ENCODE measurements at regions of chr7 and their contacts with region 1.

Region 1: GRCh38 chr7:101882595-101883564 is 65.5 kb downstream of the CUX1 start:
- DNase-seq: peak; percentile 93 to 99
- H3K4me3 ChIP-seq: peak overlapping the region; percentile 39; the same call in 1 of the 2 replicates
- H3K27ac ChIP-seq: peak overlapping the region; percentile 99
- H3K4me1 ChIP-seq: peaks cover 53% of the 10 kb centered on the region
- H3K27me3 ChIP-seq: no peaks in the 10 kb centered on the region
- CTCF ChIP-seq: no peak

Region 2: DNA sequence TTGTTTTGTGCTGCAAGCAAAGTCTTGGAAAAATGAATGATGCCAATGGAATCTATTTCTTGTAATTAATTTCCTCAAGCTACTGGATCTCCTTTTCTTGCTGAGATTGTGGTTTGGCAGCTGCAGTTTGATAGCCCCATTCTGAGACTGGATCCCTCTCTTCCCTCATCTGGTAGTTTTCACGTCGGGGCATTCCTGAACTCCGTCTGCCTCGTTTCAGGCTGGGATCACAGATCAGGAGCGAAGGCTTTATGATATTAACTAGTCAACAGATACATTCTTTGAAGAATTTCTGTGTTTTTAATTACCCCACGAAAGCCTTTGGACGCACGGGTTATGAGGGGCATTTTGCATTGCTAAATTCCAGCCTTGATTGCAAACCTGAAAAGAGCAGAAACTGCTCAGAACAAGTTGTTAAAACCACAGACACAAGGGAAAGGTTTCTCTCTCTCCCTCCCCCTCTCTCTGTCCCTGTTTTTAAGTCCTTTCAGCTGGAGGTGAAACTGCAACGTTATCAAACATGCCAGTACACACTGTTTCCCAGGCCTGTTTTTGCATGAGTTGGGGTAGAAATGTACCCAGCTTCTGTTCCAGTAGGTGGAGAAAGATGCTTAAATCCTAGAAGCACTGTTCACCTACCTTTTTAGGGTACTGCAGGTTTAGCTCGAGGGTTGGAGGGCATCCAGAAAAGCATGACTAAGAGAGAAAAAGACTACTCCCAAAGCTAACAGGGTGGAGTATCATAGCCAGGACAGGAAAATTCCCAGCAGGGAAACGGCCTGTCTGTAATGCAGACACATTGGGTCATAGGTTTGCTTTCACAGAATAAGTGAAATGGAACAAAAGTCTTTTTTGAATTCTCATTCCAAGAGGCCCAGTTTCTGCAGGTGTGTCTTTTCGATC is 58.9 kb after region 1 on chr7:
- CTCF ChIA-PET with region 1: no interaction called
- POLR2A ChIA-PET with region 1: no interaction called
- intact Hi-C with region 1: loop called (anchors 1 kb)
- DNase-seq: peak; percentile 76 to 89
- H3K4me3 ChIP-seq: no peak overlapping the region; the same call in 1 of the 2 replicates
- H3K27ac ChIP-seq: peak overlapping the region; percentile 84
- H3K4me1 ChIP-seq: peaks cover 34% of the 10 kb centered on the region
- H3K27me3 ChIP-seq: no peaks in the 10 kb centered on the region
- CTCF ChIP-seq: no peak

Region 3: GRCh38 chr7:102028206-102028835 is 145.4 kb after region 1 on chr7:
- CTCF ChIA-PET with region 1: no interaction called
- POLR2A ChIA-PET with region 1: no interaction called
- intact Hi-C with region 1: no loop called
- DNase-seq: no peak
- H3K4me3 ChIP-seq: no peak overlapping the region
- H3K27ac ChIP-seq: no peak overlapping the region
- H3K4me1 ChIP-seq: peaks cover 3% of the 10 kb centered on the region; the same call in 1 of the 2 replicates
- H3K27me3 ChIP-seq: no peaks in the 10 kb centered on the region
- CTCF ChIP-seq: no peak

Region 4: GRCh38 chr7:102042016-102042656 is 159.3 kb after region 1 on chr7:
- CTCF ChIA-PET with region 1: interaction called, 15 read pairs
- POLR2A ChIA-PET with region 1: no interaction called
- intact Hi-C with region 1: no loop called
- DNase-seq: peak; percentile 33 to 69
- H3K4me3 ChIP-seq: no peak overlapping the region
- H3K27ac ChIP-seq: 0 out of 2 replicates have a peak overlapping the region, but pooled peaks have one; percentile 21
- H3K4me1 ChIP-seq: peaks cover 6% of the 10 kb centered on the region
- H3K27me3 ChIP-seq: no peaks in the 10 kb centered on the region
- CTCF ChIP-seq: no peak

Region 5: DNA sequence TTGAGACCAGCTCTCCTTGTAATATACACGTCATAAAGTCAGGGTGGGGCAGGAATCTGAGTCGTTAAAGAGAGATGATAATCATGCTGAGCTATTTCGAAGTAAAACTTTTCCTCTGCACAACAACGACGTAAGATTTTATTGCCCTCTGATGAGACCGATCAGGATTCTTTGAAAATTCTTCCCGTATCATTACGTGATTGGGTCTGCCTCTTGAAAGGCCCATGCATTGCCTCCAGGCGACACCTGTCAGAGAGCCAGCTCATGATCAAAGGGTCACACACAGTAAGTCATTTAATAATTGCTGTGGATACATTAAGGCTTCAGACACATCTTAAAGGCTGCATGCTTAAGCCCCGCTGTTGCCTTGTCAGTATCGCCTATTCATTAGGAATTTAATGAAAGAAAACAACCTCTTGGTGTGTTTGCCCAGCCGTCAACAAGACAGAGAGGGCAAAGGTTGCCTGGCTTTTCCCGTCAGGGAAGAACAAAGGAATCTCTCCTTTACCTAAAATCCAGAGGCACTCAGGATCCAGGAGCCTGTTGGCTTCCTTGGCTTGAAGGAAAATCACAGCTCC is 214.8 kb after region 1 on chr7:
- CTCF ChIA-PET with region 1: no interaction called
- POLR2A ChIA-PET with region 1: no interaction called
- intact Hi-C with region 1: no loop called
- DNase-seq: no peak
- H3K4me3 ChIP-seq: no peak overlapping the region
- H3K27ac ChIP-seq: no peak overlapping the region
- H3K4me1 ChIP-seq: 0 out of 2 replicates have a peak, but pooled peaks cover 6% of the 10 kb centered on the region
- H3K27me3 ChIP-seq: no peaks in the 10 kb centered on the region
- CTCF ChIP-seq: no peak

Region 6: DNA sequence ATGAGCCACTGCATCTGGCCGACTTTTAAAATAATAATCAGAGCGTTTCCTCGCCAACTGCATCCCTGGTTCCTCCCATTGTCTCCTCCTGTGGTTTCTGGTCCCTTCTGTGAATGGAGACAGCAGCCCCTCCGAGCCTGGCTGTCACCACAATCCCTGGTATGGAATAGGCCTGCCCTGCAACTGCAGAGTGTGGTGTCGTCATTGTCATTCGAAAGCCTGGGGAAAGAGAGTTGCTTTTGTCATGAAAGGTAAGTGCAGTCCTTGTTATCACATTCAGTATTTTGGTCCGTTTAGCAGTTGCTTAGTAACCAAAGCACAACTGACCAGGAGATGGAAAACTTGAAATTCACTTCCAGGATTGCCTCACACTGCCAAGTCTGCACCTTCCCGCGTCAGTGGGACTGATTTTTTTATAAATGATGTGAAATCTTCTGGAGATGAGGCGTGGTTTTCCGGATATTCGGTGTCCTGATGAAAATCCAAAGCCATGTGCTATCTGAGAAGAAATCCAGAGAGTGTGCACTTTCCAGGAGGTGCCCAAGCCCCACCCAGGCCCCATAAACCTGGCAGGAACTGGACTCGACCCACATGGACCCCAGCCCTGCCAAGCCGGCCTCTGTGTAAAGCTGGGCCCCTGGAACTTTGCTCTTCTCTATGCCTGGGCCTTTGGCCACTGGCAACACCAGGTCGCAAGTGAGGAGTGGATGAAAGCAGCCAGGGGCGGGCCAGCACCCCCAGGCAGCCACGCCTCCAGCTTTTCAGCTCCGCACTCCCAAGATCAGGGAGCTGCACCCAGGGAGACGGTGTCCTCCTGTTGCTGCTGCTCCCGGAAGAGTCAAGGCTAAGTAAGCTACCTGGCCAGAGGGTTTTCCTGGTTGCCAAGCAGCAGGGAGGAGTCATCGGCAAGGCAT is 270.0 kb after region 1 on chr7:
- CTCF ChIA-PET with region 1: no interaction called
- POLR2A ChIA-PET with region 1: interaction called, 7 read pairs
- intact Hi-C with region 1: loop called (anchors 1 kb)
- DNase-seq: peak; percentile 97 to 98
- H3K4me3 ChIP-seq: peak overlapping the region; percentile 36; the same call in 1 of the 2 replicates
- H3K27ac ChIP-seq: peak overlapping the region; percentile 99
- H3K4me1 ChIP-seq: peaks cover 41% of the 10 kb centered on the region
- H3K27me3 ChIP-seq: no peaks in the 10 kb centered on the region
- CTCF ChIP-seq: no peak

Region 7: GRCh38 chr7:102396027-102397019 is 513.4 kb after region 1 on chr7 and contains the start of gene PRKRIP1:
- CTCF ChIA-PET with region 1: interaction called, 6 read pairs
- POLR2A ChIA-PET with region 1: no interaction called
- intact Hi-C with region 1: loop called (anchors 10 kb)
- DNase-seq: peak; percentile 91 to 94
- H3K4me3 ChIP-seq: peak within 1 kb of the TSS; percentile 86
- H3K27ac ChIP-seq: peak within 1 kb of the TSS; percentile 64
- H3K4me1 ChIP-seq: peaks cover 38% of the 10 kb centered on the region
- H3K27me3 ChIP-seq: no peaks in the 10 kb centered on the region
- CTCF ChIP-seq: no peak
- total RNA-seq, gene PRKRIP1: 34.6 and 43.1 TPM in 2 replicates